Natural killer cell (primary cell): ENCODE measurements at regions of chr10 and their contacts with region 1.

Region 1: DNA sequence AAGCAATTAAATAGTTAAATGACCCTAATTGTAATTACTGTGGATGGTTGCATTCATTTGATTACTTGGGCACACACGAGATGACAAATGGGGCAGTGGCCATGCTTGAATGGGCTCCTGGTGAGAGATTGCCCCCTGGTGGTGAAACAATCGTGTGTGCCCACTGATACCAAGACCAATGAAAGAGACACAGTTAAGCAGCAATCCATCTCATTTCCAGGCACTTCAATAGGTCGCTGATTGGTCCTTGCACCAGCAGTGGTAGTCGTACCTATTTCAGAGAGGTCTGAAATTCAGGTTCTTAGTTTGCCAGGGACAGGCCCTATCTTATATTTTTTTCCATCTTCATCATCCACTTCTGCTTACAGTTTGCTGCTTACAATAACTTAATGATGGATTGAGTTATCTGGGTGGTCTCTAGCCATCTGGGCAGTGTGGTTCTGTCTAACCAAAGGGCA is 8.3 kb downstream of the PCBD1 start:
- DNase-seq: peak; percentile 64 to 89
- ATAC-seq: peak; percentile 81 to 99 (median 92)
- H3K4me3 ChIP-seq: no peak overlapping the region
- H3K4me3 Mint-ChIP-seq: no peak overlapping the region
- H3K27ac ChIP-seq: no peak overlapping the region
- H3K27ac Mint-ChIP-seq: no peak overlapping the region
- H3K4me1 ChIP-seq: no peaks in the 10 kb centered on the region
- H3K4me1 Mint-ChIP-seq: peaks cover 7 to 8% of the 10 kb centered on the region in 2 donors
- H3K27me3 ChIP-seq: no peaks in the 10 kb centered on the region
- H3K27me3 Mint-ChIP-seq: no peaks in the 10 kb centered on the region
- CTCF ChIP-seq: peak; percentile 87

Region 2: DNA sequence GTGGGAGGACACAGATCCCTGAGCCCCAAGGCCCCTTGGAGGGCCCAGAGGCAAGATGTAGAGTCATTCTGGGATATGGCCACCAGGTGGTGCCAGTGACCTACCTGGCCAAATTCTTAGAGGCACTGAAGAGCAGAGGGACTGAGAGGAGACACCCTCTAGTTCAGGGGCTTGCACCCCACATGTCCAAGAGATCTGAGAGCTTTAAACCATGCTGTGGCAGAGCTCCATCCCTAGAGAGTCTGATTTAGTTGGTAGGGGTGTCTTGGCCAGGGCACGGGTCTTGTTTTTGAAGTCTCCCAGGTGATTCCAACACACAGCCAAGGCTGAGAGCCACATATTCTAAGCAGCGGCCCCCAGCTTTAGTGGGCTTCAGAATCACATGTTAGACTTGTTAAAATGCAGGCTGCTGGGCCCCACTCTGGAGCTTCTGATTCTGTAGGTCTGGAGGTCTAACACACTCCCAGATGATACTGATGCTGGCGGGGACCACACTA is 330.1 kb before region 1 on chr10:
- intact Hi-C with region 1: loop called (anchors 1 kb)
- DNase-seq: peak; percentile 77 to 86
- ATAC-seq: peak; percentile 82 to 100 (median 97)
- H3K4me3 ChIP-seq: no peak overlapping the region
- H3K4me3 Mint-ChIP-seq: no peak overlapping the region
- H3K27ac ChIP-seq: no peak overlapping the region
- H3K27ac Mint-ChIP-seq: no peak overlapping the region
- H3K4me1 ChIP-seq: peaks cover 7% of the 10 kb centered on the region
- H3K4me1 Mint-ChIP-seq: peaks cover 6 to 12% of the 10 kb centered on the region in 2 donors
- H3K27me3 ChIP-seq: no peaks in the 10 kb centered on the region
- H3K27me3 Mint-ChIP-seq: no peaks in the 10 kb centered on the region
- CTCF ChIP-seq: peak; percentile 89

Region 3: GRCh38 chr10:70758757-70759514 is 121.2 kb before region 1 on chr10:
- intact Hi-C with region 1: loop called (anchors 2 kb)
- DNase-seq: peak; percentile 63 to 82
- ATAC-seq: peak; percentile 40 to 77 (median 68)
- H3K4me3 ChIP-seq: no peak overlapping the region
- H3K4me3 Mint-ChIP-seq: no peak overlapping the region
- H3K27ac ChIP-seq: no peak overlapping the region
- H3K27ac Mint-ChIP-seq: peak overlapping the region in 1 of 2 donors; percentile 60
- H3K4me1 ChIP-seq: peaks cover 4% of the 10 kb centered on the region
- H3K4me1 Mint-ChIP-seq: peaks cover 15 to 16% of the 10 kb centered on the region in 2 donors
- H3K27me3 ChIP-seq: no peaks in the 10 kb centered on the region
- H3K27me3 Mint-ChIP-seq: no peaks in the 10 kb centered on the region
- CTCF ChIP-seq: peak; percentile 94

Region 4: GRCh38 chr10:70815504-70816219 is 64.4 kb before region 1 on chr10 and contains the start of gene SGPL1:
- intact Hi-C with region 1: loop called (anchors 1 kb)
- DNase-seq: peak; percentile 87 to 91
- ATAC-seq: peak; percentile 98 to 99 (median 98)
- H3K4me3 ChIP-seq: peak within 1 kb of the TSS; percentile 57
- H3K4me3 Mint-ChIP-seq: peak within 1 kb of the TSS; percentile 90
- H3K27ac ChIP-seq: peak within 1 kb of the TSS; percentile 45
- H3K27ac Mint-ChIP-seq: peak within 1 kb of the TSS; percentile 75 to 81
- H3K4me1 ChIP-seq: peaks cover 12% of the 10 kb centered on the region
- H3K4me1 Mint-ChIP-seq: peaks cover 15 to 36% of the 10 kb centered on the region in 2 donors
- H3K27me3 ChIP-seq: no peaks in the 10 kb centered on the region
- H3K27me3 Mint-ChIP-seq: no peaks in the 10 kb centered on the region
- CTCF ChIP-seq: peak; percentile 95
- total RNA-seq, gene SGPL1: 33.7 to 48.4 (median 47.8) TPM